ENCODE measurements at regions of chr10 and their contacts with region 1.

Region 1: DNA sequence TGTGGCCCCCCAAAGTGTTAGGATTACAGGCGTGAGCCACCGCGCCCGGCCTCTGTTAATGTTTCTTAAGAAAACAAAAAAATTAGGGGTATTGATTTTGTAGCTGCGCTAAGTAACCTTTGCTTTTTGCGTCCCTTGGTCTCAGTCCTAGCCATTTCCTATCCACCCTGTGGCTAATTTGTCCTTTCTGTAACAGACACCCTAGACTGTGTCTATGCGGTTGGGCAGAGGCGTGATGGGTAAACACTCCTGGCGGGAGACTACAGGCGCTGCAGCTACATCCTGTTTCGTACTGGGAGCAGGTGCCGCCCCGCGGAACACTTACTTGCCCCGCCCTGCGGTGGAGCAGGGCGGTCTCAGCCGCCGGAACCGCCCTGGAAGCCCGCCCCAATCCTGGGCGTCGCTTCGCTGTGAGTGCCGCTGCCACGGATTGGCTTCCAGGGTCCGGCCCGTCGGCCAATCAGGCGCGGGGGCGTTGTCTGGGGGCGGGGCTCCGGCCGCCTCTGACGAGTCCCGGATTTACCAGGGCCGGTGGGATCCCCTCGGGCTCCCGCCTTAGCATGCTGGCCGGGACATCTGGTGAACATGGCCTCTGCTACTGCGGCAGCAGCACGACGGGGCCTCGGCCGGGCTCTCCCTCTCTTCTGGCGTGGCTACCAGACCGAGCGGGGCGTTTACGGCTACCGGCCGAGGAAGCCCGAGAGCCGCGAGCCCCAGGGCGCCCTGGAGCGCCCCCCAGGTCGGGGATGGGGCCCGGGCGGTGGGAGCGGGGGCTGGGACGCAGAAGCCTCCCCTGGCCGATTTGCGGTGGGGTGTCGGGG is at the start of gene DHTKD1:
- DNase-seq: peak; percentile 98 to 99
- H3K4me3 ChIP-seq: peak within 1 kb of the TSS; percentile 95 to 100
- H3K27ac ChIP-seq: peak within 1 kb of the TSS; percentile 92 to 93
- H3K4me1 ChIP-seq: peaks cover 0 to 16% (median 11%) of the 10 kb centered on the region in 4 donors
- H3K27me3 ChIP-seq: no peaks in the 10 kb centered on the region
- CTCF ChIP-seq: peak; percentile 50 to 82

Region 2: DNA sequence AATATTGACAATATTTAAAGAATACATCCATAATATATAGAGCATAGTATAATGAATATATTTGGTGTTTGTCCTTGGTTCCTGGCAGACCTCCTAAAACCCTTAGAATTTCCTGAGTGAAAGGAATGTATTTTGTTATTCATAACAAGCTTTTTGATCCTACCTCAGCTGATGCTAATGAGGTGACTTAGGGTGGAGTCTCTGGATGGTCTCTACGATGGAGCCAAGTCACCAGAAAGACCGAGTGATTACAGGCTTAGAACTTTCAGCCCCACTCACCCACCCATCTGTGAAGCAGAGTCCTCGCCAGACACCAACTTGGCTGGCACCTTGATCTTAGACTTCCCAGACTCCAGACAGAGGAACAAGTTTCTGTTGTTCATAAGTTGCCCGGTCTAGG is 62.0 kb before region 1 on chr10:
- intact Hi-C with region 1: no loop called
- DNase-seq: no peak
- H3K4me3 ChIP-seq: no peak overlapping the region
- H3K27ac ChIP-seq: no peak overlapping the region
- H3K4me1 ChIP-seq: no peaks in the 10 kb centered on the region
- H3K27me3 ChIP-seq: no peaks in the 10 kb centered on the region
- CTCF ChIP-seq: no peak

Region 3: DNA sequence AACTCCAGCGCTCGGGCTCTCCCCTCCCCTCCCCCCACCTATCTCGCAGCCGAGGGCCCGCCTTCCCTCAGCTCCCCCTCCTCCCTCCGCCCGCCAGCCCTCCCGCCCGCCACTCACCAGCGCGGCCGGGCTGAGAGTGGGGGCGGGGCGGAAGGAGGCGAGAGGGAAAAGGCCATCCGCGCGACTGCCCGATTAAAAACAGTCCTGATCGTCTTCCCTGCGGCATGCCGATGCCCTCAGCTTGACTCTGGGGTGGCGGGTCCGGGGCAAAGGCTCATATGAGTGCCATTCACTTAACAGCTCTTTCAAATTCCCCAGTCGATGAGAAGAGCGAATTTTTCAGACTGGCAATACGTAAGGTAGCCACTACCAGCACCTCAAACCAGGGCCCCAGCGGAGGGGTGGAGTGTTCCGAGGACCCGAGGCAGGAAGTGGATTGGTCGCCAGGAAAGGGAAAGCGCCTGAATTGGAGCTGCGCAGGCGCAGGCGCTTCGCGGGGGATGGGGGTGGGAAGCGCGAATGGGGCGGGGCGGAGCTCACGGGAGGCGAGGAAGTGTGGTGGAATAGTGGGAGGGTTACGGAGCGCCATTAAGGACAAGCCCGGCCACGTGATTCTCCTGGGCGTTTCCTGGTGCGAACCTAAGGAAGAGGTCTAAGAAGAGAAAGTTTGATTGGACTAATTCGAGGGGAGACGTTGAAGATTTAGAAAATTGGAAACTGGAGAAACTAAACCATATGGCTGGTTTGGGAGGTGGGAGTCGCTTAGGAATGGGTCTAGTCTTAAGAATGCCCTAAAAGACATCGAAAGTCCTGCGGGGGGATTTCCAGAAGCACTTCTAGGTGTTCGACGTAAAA is 25.6 kb before region 1 on chr10 and contains the start of gene UPF2:
- intact Hi-C with region 1: loop called (anchors 1 kb)
- DNase-seq: peak; percentile 99
- H3K4me3 ChIP-seq: peak within 1 kb of the TSS; percentile 80 to 98
- H3K27ac ChIP-seq: peak within 1 kb of the TSS; percentile 88 to 93
- H3K4me1 ChIP-seq: peaks cover 0 to 19% (median 5%) of the 10 kb centered on the region in 4 donors
- H3K27me3 ChIP-seq: no peaks in the 10 kb centered on the region
- CTCF ChIP-seq: peak in 1 of 2 experiments; percentile 36